ENCODE measurements at regions of chr19 and their contacts with region 1.

Region 1: GRCh38 chr19:40831502-40832442 is 18.5 kb downstream of the CYP2A6 start:
- DNase-seq: peak; percentile 92
- ATAC-seq: peak; percentile 94
- H3K4me3 ChIP-seq: no peak overlapping the region
- H3K27ac ChIP-seq: peak overlapping the region; percentile 54
- H3K4me1 ChIP-seq: peaks cover 7% of the 10 kb centered on the region
- H3K27me3 ChIP-seq: no peaks in the 10 kb centered on the region
- CTCF ChIP-seq: no peak

Region 2: DNA sequence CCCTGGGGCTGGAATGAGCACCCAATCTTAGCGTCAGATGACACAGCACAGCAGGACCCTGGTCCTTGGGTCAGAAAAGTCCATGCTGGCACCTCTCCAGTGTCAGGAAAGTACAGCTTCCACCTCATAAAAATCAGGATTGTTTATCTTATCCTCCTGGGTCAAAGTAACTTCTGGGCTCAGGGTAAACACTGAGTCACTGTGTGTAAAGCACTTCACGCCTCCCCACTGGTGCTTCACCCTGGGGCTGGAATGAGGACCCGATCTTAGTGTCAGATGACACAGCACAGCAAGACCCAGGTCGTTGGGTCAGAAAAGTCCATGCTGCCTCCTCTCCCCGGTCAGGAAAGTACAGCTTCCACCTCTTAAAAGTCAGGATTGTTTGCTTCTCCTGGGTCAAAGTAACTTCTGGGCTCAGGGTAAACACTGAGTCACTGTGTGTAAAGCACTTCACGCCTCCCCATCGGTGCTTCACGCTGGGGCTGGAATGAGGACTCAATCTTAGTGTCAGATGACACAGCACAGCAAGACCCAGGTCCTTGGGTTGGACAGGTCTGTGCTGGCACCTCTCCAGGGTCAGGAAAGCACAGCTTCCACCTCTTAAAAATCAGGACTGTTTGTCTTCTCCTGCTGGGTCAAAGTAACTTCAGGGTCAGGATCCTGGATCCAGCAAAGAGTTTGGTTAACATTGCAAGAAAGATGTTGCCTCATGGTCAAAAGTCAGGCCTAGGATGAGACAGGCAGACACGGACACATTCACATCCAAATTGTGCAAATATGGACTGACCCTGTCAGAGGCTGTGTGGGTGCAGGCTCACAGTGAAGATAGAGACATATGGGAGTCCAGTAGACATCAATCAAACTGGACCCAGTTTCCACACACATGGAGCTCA is 89.5 kb after region 1 on chr19:
- CTCF ChIA-PET with region 1: no interaction called
- POLR2A ChIA-PET with region 1: no interaction called
- intact Hi-C with region 1: loop called (anchors 5 kb)
- DNase-seq: peak; percentile 95
- ATAC-seq: peak; percentile 85
- H3K4me3 ChIP-seq: no peak overlapping the region
- H3K27ac ChIP-seq: peak overlapping the region; percentile 77
- H3K4me1 ChIP-seq: peaks cover 28% of the 10 kb centered on the region
- H3K27me3 ChIP-seq: no peaks in the 10 kb centered on the region
- CTCF ChIP-seq: no peak